Tibial artery (tissue), 4 donors: ENCODE measurements at regions of chr17 and their contacts with region 1.

Region 1: DNA sequence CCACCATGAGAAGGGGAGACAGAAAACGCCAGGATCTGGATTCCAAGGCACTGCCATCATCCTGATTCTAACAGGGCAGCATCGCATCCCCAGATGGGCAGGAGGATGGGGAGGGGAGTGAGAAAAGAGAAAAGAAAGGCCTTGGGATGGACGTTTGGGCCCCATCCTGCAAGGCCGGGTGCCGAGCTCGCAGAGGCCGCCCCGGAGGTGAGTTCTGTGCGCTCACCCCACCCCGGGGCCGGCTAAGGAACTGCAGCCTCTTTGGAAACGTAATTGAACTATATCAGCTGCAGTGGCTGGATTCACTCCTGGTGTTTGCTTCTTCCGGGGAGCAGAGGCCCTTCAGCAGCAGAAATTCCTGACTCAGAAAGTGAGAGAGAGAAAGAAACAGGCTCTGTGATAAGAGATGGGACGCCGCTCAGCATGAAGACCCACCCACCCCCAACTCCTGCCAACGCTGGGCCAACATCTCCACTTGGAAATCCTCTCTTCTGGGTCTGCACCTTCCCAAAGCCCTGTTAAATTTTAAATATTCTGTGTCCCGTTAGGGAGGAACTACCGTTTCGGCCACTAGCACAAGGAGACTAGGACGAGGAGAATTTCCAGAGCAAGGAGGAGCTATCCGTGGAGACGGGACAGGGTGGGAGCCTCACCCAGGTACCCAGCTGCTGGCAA is 8.5 kb upstream of the SSTR2 start:
- DNase-seq: peak; percentile 74 to 75
- H3K4me3 ChIP-seq: no peak overlapping the region
- H3K27ac ChIP-seq: no peak overlapping the region
- H3K4me1 ChIP-seq: no peaks in the 10 kb centered on the region
- H3K27me3 ChIP-seq: peaks cover 0 to 28% of the 10 kb centered on the region in 2 donors
- CTCF ChIP-seq: peak; percentile 87 to 88

Region 2: DNA sequence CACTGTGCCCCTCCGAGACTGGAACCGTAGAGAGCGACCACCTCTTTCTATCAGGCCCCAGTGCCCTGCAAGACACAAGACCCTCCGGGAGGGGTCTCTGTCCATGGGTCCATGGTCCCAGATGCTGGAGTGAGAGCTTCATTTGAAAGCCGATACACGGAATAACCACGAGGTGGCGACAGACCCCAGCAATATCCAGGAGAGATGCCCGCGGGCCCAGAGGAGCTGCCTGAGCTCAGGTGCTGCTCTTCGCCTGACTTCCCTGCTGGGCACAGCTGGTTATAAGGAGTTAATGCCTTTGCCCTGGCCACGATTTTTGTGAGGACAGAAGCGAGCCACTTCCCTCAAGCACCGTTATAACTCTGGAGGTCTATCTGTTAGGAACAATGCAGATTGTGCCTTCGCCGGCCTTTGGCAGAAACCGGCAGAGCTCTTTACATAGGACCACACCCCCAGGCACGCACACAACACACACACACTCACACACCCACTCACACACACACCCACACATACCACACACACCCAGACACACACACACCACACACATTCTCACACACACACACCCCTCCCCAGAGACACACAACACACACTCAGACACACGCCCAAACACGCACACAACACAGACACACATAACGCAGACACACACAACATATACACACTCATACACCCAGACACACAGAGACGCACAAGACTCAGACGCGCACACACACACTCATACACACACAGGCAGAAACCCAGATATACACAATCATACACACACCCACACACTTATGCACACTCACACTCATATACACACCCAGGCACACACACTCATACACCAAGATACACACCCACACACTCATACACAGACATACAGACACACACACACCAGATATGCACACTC is 599.1 kb before region 1 on chr17:
- intact Hi-C with region 1: loop called (anchors 10 kb)
- DNase-seq: peak in 1 of 2 donors; percentile 56
- H3K4me3 ChIP-seq: no peak overlapping the region
- H3K27ac ChIP-seq: no peak overlapping the region
- H3K4me1 ChIP-seq: no peaks in the 10 kb centered on the region
- H3K27me3 ChIP-seq: peaks cover 0 to 22% of the 10 kb centered on the region in 2 donors
- CTCF ChIP-seq: peak; percentile 56 to 78

Region 3: DNA sequence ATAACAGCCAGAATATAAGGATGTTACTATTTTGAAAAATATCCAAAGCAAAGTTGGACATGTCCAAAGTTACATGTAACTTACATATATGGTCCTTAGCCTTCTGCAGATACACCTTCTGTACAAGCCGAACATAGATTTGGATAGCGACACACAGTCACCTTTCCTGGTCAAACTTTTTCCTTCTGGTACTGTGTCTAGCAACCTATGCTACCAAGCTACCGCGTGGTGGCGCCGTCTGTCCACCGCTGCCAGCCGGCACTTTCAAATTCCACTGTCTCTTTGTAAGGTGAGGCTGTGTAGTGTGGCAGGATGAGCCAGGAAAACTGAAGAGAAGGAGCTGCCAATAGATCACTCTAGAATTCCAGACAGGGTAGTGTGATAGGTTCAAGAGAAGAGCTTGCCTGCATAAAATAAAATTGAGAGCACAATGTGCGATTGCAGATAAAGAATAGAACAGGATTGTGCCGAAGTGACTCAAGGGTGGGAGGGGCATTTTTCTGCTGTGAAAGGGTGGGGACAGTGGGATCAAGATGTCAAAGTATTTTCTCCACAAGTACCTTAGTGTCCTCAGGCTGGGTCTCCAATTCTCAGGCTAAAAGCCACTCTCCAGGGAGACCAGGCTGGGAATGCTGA is 430.8 kb before region 1 on chr17:
- intact Hi-C with region 1: loop called (anchors 10 kb)
- DNase-seq: no peak
- H3K4me3 ChIP-seq: no peak overlapping the region
- H3K27ac ChIP-seq: no peak overlapping the region
- H3K4me1 ChIP-seq: no peaks in the 10 kb centered on the region
- H3K27me3 ChIP-seq: no peaks in the 10 kb centered on the region
- CTCF ChIP-seq: peak; percentile 71 to 78

Region 4: DNA sequence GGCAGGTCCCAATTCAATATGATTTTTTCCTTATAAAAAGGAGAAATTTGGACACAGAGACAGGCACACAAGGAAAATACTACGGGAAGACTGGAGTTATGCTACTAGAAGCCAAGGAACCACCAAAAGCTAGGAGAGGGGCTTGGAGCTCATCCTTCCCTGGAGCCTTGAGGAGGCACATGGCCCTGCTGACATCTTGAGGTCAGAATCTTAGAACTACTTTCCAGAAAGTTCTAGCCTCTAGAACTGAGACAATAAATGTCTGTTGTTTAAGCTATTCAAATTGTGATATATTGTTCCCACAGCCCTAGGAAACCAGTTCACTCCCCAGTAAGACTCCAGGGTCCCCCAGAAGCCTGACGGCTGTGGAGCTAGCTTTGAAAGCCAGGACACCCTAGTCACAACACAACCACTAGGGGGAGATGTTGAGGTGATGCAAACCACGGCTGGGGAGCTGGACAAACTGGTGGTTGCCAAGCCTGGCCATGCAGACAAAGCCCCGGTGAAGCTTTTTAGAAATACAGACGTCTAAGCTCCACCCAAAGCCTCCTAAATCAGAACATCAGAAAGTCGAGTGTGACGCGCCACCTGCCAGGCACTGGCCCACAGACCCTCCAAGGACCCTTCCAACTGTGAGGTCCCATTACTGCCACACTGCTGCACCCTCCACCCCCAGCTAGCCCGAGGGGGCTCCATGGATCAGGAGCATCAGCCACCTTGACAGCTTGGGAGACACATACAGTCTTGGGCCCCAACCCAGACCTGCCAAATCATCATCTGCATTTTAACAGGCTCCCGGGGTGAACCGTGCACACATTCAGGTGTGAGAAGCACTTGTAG is 170.2 kb before region 1 on chr17:
- intact Hi-C with region 1: loop called (anchors 5 kb)
- DNase-seq: peak; percentile 62 to 70
- H3K4me3 ChIP-seq: no peak overlapping the region
- H3K27ac ChIP-seq: no peak overlapping the region
- H3K4me1 ChIP-seq: peaks cover 0 to 6% (median 3%) of the 10 kb centered on the region in 4 donors
- H3K27me3 ChIP-seq: no peaks in the 10 kb centered on the region
- CTCF ChIP-seq: peak; percentile 76 to 83

Region 5: DNA sequence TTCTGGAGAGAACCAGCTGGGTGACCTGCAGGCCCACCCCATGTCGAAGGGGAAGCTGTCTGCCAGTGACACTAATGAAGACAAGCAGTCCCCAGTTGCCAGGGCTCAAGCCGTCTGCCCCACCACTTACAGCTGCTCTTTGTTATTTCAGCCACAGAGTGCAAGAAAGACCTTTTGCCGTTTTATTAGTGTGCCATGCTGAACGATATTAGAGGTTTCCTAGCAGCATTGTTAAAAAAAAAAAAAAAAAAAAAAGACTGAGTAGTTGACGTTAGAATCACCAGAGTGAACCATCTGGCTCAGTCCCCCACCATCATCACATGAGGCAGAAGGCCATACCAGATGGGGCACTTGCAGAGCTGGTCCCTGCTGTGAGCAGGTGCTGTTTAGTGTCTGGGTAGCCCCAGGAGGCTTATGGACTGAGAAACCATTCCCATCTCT is 37.3 kb before region 1 on chr17:
- intact Hi-C with region 1: no loop called
- DNase-seq: no peak
- H3K4me3 ChIP-seq: no peak overlapping the region
- H3K27ac ChIP-seq: no peak overlapping the region
- H3K4me1 ChIP-seq: no peaks in the 10 kb centered on the region
- H3K27me3 ChIP-seq: no peaks in the 10 kb centered on the region
- CTCF ChIP-seq: no peak